Activated T-helper 1 cell treated with anti-CD3 and anti-CD28 coated beads, Interleukin-12 subunit alpha, Interleukin-12 subunit beta, Interleukin-2, Interleukin-4 antibody, amounts not matched to agents 30 ng/mL and 10 ng/mL and 1 ng/mL, durations not matched to agents 14 hours and 24 hours and 36 hours (primary cell): ENCODE measurements at regions of chr6 and their contacts with region 1.

Region 1: GRCh38 chr6:105484238-105485161 is 81.6 kb upstream of the PREP start:
- DNase-seq: no peak
- H3K4me3 Mint-ChIP-seq: peak overlapping the region; percentile 27
- H3K27ac Mint-ChIP-seq: peak overlapping the region; percentile 59
- H3K4me1 Mint-ChIP-seq: peaks cover 72% of the 10 kb centered on the region
- H3K27me3 Mint-ChIP-seq: peaks cover 7% of the 10 kb centered on the region

Region 2: DNA sequence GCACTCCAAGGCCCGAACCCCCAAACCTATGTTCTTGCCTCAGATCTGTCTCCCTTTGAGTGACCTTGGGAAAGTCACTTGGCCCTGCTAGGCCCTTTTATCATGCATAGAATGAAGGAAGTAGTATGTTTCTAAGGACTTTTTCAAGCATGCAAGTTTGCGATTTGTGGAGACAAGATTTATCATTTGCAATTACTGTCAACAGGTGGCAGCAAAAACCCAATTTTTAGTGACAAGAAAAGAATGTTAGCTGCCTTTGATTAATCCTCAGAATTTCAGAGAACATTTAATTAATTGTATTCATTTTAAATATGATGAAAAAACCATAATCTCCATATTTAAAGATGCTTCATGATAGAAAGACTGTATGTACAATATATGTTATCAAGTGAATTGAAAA is 53.3 kb before region 1 on chr6:
- intact Hi-C with region 1: loop called (anchors 1 kb)
- DNase-seq: peak; percentile 12
- H3K4me3 Mint-ChIP-seq: no peak overlapping the region
- H3K27ac Mint-ChIP-seq: no peak overlapping the region
- H3K4me1 Mint-ChIP-seq: peaks cover 5% of the 10 kb centered on the region
- H3K27me3 Mint-ChIP-seq: peaks cover 35% of the 10 kb centered on the region

Region 3: GRCh38 chr6:105601541-105602236 is 117.2 kb after region 1 on chr6:
- intact Hi-C with region 1: loop called (anchors 2 kb)
- DNase-seq: peak; percentile 41
- H3K4me3 Mint-ChIP-seq: peak overlapping the region; percentile 64
- H3K27ac Mint-ChIP-seq: peak overlapping the region; percentile 89
- H3K4me1 Mint-ChIP-seq: peaks cover 37% of the 10 kb centered on the region
- H3K27me3 Mint-ChIP-seq: peaks cover 2% of the 10 kb centered on the region

Region 4: GRCh38 chr6:105733565-105734162 is 249.2 kb after region 1 on chr6:
- intact Hi-C with region 1: loop called (anchors 1 kb)
- DNase-seq: no peak
- H3K4me3 Mint-ChIP-seq: no peak overlapping the region
- H3K27ac Mint-ChIP-seq: no peak overlapping the region
- H3K4me1 Mint-ChIP-seq: peaks cover 44% of the 10 kb centered on the region
- H3K27me3 Mint-ChIP-seq: peaks cover 3% of the 10 kb centered on the region

Region 5: DNA sequence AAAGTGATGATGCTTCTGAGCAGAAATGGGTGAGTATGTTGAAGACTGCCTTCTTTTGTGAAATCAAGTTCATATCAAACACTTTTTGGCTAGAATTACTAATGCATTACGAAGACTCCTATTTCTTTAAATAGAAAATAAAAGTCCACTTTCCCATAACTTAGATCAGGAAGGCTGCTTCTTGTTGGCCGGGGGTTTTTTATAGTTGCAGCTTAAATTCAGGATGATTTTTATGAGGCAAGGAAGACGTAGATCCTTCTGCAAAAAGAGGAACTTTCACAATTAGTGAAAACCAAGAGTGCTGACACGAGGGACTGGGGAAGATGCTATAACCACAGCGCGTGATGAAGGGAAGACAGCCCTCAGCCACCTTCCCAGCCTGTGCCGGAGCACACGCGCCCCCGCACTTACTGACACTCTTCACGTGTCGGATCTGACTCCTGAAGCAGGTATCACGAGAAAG is 395.6 kb after region 1 on chr6:
- intact Hi-C with region 1: loop called (anchors 5 kb)
- DNase-seq: no peak
- H3K4me3 Mint-ChIP-seq: peak overlapping the region; percentile 32
- H3K27ac Mint-ChIP-seq: peak overlapping the region; percentile 5
- H3K4me1 Mint-ChIP-seq: peaks cover 60% of the 10 kb centered on the region
- H3K27me3 Mint-ChIP-seq: peaks cover 14% of the 10 kb centered on the region

Region 6: DNA sequence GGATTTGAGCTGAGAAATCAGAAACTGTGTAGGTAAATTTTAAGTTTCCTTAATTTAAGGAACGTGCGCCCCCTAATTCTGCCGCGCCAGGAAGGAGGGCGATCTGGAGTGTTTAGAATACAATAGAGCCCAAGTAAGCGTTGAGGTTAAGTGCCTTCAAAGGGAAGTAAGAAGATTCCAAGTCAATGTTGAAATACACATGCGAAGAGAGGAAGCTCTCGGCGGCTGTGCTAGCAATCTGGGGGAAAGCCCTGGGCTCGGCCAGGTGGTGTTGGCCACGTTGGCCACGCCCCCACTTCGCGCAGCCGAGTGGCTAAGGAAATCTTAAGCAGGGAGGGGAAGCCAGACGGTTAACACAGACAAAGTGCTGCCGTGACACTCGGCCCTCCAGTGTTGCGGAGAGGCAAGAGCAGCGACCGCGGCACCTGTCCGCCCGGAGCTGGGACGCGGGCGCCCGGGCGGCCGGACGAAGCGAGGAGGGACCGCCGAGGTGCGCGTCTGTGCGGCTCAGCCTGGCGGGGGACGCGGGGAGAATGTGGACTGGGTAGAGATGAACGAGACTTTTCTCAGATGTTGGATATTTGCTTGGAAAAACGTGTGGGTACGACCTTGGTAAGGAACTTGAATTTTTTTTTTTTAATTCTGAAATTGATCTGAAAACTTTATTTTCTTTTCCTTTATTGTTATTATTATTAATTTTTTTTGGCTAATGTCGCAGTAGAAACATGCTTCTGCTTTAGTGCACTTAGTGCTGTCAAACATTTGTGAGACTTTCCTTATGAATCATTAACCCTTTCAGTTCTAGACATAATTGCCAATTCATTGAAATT is 601.7 kb after region 1 on chr6 and contains the start of gene PRDM1:
- intact Hi-C with region 1: loop called (anchors 2 kb)
- DNase-seq: peak; percentile 83
- H3K4me3 Mint-ChIP-seq: peak within 1 kb of the TSS; percentile 96
- H3K27ac Mint-ChIP-seq: peak within 1 kb of the TSS; percentile 80
- H3K4me1 Mint-ChIP-seq: peaks cover 86% of the 10 kb centered on the region
- H3K27me3 Mint-ChIP-seq: peaks cover 7% of the 10 kb centered on the region
- total RNA-seq, gene PRDM1: 74.1 and 78.8 TPM in 2 replicates

Region 7: GRCh38 chr6:106300944-106301343 is 816.4 kb after region 1 on chr6:
- intact Hi-C with region 1: loop called (anchors 1 kb)
- DNase-seq: no peak
- H3K4me3 Mint-ChIP-seq: no peak overlapping the region
- H3K27ac Mint-ChIP-seq: no peak overlapping the region
- H3K4me1 Mint-ChIP-seq: peaks cover 14% of the 10 kb centered on the region
- H3K27me3 Mint-ChIP-seq: no peaks in the 10 kb centered on the region